ENCODE measurements at regions of chr5 and their contacts with region 1.

Region 1: DNA sequence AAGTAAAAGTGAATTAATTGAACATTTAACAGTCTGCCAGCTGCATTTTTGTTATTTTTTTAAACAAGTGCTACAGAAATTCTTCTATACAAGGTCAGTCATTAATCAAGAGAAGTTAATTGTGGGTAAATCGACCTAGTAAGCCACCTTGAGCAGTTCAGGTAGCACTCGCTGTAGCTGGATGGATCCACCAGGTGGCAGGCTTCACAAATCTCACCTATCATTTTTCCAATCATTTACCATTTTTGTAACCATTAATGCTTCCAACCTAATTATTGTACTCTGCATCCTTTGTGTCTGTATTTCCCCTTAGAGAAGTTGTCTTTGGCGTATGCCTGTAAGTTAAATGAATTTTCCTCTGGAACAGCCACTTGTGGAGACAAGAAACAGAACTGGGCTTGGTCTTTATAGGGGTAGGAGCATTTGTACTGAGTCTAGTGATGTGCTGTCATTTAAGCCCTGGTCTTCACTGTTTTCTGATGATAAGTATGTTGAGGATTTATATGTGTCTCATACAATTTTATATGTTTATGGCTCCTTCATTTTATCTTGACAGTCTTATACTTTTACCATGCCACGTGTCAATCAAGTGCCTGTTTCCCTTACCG is 39.5 kb downstream of the CD180 start:
- DNase-seq: peak in 1 of 2 donors; percentile 82
- ATAC-seq: peak in 2 of 3 donors; percentile 67 to 78
- H3K4me3 ChIP-seq: no peak overlapping the region
- H3K4me3 Mint-ChIP-seq: no peak overlapping the region
- H3K27ac ChIP-seq: no peak overlapping the region
- H3K27ac Mint-ChIP-seq: no peak overlapping the region
- H3K4me1 ChIP-seq: no peaks in the 10 kb centered on the region
- H3K4me1 Mint-ChIP-seq: peaks cover 28 to 32% of the 10 kb centered on the region in 2 donors
- H3K27me3 ChIP-seq: no peaks in the 10 kb centered on the region
- H3K27me3 Mint-ChIP-seq: no peaks in the 10 kb centered on the region
- CTCF ChIP-seq: peak; percentile 90

Region 2: GRCh38 chr5:67095346-67096171 is 61.5 kb before region 1 on chr5:
- intact Hi-C with region 1: no loop called
- DNase-seq: no peak
- ATAC-seq: no peak
- H3K4me3 ChIP-seq: no peak overlapping the region
- H3K4me3 Mint-ChIP-seq: no peak overlapping the region
- H3K27ac ChIP-seq: no peak overlapping the region
- H3K27ac Mint-ChIP-seq: no peak overlapping the region
- H3K4me1 ChIP-seq: no peaks in the 10 kb centered on the region
- H3K4me1 Mint-ChIP-seq: peaks cover 6% of the 10 kb centered on the region in 2 donors
- H3K27me3 ChIP-seq: no peaks in the 10 kb centered on the region
- H3K27me3 Mint-ChIP-seq: no peaks in the 10 kb centered on the region
- CTCF ChIP-seq: no peak

Region 3: DNA sequence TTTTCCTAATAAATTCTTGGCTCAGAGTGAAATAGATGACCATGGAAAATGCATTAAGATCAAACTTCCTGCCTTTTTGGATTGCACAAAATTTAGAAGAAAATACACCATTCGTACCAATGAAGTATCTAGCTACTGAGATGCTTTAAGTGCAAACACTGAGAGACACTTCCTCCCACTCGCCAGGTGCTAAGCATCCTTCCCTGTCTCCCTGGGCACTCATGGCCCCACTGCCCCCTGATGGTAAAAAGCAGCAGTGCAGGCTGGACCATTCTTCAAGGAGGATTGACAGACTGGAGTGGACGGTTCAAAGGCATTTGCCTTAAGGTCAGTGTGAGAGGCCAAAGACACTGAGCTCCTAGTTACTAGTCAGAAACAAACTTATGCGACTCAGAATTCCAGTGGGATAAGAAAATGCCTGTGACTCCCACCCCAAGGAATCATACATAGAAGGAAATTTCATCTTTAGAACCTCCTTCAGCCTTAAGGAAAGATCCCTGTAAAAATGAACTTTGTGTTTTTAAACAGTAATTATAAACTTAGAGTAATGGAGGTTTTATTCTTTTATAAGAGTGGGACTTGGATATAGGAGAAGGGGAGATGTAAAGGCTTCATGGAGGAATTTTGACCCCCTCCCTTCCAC is 1850.8 kb after region 1 on chr5:
- intact Hi-C with region 1: loop called (anchors 10 kb)
- DNase-seq: peak; percentile 40 to 79
- ATAC-seq: peak; percentile 75 to 87 (median 78)
- H3K4me3 ChIP-seq: no peak overlapping the region
- H3K4me3 Mint-ChIP-seq: no peak overlapping the region
- H3K27ac ChIP-seq: no peak overlapping the region
- H3K27ac Mint-ChIP-seq: no peak overlapping the region
- H3K4me1 ChIP-seq: no peaks in the 10 kb centered on the region
- H3K4me1 Mint-ChIP-seq: no peaks in the 10 kb centered on the region
- H3K27me3 ChIP-seq: no peaks in the 10 kb centered on the region
- H3K27me3 Mint-ChIP-seq: peaks cover 14 to 50% of the 10 kb centered on the region in 2 donors
- CTCF ChIP-seq: peak; percentile 79